ENCODE measurements at regions of chr17 and their contacts with region 1.

Region 1: DNA sequence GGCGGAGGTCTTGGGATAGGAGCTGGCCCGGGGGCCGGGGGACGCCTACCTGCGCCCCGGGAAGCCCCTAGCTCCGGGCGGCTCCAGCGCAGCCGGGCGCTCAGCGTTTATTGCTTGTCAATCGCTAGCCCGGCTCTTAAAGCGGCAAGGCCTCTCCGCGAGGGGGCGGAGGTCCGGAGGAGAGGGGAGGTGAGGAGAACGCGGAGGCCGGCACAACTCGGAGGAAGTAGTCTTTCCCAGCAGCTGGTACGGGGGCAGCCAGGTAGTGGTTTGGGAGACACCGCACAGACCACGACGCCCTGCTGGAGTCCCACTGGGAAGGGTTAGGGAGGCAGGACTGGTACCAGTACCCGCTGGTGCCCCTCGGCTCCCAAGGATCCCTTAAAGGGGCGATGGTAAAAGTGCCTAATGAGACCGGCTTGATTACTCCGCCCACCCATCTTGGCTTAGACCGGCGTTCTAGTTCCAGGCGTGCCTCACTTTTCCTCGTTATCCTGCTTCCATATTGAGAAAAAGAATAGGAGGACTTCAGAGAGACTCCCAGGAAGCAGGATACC is at the start of gene MPP2:
- DNase-seq: peak; percentile 75
- ATAC-seq: peak; percentile 49
- H3K4me3 Mint-ChIP-seq: peak within 1 kb of the TSS; percentile 34
- H3K27ac Mint-ChIP-seq: no peak within 1 kb of the TSS
- H3K4me1 Mint-ChIP-seq: peaks cover 17% of the 10 kb centered on the region
- H3K27me3 Mint-ChIP-seq: peaks cover 25% of the 10 kb centered on the region
- total RNA-seq, gene MPP2: 1.2 to 1.3 TPM

Region 2: GRCh38 chr17:43927060-43927864 is 19.8 kb after region 1 on chr17:
- CTCF ChIA-PET with region 1: interaction called, 35 read pairs
- POLR2A ChIA-PET with region 1: no interaction called
- intact Hi-C with region 1: no loop called
- DNase-seq: peak; percentile 55
- ATAC-seq: peak; percentile 52
- H3K4me3 Mint-ChIP-seq: peak overlapping the region; percentile 68
- H3K27ac Mint-ChIP-seq: peak overlapping the region; percentile 74
- H3K4me1 Mint-ChIP-seq: peaks cover 21% of the 10 kb centered on the region
- H3K27me3 Mint-ChIP-seq: peaks cover 3% of the 10 kb centered on the region

Region 3: DNA sequence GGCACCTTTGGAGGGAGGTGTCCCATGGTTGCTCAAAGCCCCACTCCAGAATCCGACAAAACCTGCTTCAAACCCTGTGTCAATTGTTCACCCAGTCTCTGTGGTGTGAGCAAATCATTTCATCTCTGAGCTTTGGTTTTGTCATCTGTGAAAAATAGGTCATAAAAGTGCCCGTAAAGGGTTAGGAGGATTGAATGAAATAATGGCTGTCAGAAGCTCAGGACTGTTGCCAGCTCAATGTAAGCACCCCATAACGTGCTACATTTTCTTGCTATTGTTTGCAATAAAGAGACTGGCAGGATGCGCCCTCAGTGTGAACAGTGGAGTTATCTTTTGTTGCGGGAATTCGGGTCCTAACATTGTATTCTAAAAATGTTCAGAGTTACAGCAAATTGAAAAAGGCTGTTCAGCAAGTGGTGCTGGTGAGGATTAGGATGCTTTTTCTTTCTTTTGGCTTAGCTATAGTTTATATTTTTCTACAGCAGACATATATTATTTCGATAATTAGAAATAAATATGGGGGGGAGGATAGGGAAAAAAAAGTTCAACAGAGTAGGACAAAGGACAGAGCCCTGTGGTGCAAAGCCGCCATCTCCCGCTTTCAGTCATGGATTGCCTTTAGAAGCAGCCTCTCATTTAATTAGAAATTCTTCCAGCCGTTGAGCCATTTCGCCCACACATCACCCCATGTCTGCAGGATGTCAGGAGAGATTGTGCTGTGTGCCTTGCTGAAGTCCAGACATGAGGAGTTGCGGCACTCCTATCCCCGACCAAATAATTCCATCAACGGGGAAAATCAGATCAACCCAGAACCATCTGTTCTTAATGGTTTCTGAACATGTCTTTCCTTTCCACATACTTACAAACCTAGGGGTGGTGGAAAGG is 67.1 kb after region 1 on chr17:
- CTCF ChIA-PET with region 1: no interaction called
- POLR2A ChIA-PET with region 1: no interaction called
- intact Hi-C with region 1: no loop called
- DNase-seq: no peak
- ATAC-seq: no peak
- H3K4me3 Mint-ChIP-seq: no peak overlapping the region
- H3K27ac Mint-ChIP-seq: no peak overlapping the region
- H3K4me1 Mint-ChIP-seq: no peaks in the 10 kb centered on the region
- H3K27me3 Mint-ChIP-seq: peaks cover 9% of the 10 kb centered on the region

Region 4: DNA sequence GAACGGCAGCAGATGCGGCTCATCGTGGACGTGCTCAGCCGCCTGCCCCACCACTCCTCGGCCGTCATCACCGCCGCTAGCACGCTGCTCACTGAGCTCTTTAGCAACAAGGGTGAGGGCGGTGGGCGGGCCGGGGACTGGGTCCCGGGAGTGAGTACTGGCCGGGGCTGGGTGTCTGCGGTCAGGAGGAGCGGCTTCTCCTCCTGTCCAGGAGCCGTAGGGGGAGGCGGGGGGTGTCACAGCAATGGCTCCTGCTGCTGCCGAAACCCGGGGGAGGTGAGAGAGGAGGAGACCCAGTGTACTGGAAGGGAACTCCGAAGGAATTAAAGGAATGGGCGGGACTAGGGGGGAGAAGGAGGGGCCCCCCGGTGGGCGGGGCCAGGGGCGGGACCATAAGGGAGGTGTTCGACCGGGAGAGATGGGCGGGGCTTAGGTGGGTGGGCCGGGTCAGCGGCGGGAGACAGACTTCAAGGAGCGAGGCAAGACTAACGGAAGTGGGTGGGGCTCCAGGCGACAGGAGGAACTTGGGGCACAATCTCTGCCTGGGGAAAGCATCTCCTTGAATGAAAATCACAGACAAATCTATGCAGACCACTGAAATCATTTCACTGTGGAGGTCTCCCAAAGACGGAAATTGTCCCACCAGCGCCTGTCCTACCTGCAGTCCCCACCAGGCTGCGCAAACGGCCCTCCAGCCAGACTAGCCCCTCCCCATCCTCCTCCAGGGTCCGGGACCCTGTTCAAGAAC is 99.3 kb after region 1 on chr17:
- CTCF ChIA-PET with region 1: interaction called, 7 read pairs
- POLR2A ChIA-PET with region 1: no interaction called
- intact Hi-C with region 1: loop called in 1 of 2 experiments (anchors 2 kb)
- DNase-seq: peak; percentile 99
- ATAC-seq: peak; percentile 84
- H3K4me3 Mint-ChIP-seq: peak overlapping the region; percentile 78
- H3K27ac Mint-ChIP-seq: peak overlapping the region; percentile 86
- H3K4me1 Mint-ChIP-seq: peaks cover 20% of the 10 kb centered on the region
- H3K27me3 Mint-ChIP-seq: peaks cover 17% of the 10 kb centered on the region

Measured in activated CD4-positive, alpha-beta T cell treated with anti-CD3 and anti-CD28 coated beads for 36 hours (primary cell).